A673 (cell line): ENCODE measurements at regions of chr9 and their contacts with region 1.

Region 1: DNA sequence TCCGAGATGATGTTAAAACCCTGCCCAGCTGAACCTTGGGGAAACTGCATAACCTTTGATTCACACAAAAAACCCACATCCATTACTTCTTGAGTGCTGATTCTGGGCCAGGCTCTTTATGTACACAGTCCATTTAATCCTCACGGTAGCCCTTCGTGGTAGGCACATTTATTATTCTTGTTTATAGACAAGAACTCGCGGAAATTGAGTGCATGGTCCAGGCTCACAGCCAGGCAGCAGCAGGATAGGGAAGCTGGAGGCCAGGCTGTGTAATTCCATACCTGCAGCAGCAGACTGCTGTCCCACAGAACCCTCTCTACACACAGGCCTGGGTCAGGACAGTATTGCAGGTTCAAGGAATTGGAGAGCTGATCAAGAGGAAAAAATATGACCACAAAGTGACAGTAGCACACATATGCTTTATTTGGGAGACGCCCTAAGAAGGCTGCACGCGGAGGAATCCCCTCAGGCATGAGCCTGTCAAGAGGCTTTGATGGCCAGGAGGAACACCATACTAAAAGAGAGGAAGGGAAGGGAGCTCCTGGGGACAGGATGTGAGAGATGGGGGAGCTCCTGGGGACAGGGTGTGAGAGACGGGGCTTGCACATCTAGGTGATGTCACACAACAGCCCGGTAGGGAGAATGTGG is 28.4 kb upstream of the FAM120A start:
- DNase-seq: no peak
- H3K4me3 ChIP-seq: no peak overlapping the region
- H3K27ac ChIP-seq: no peak overlapping the region
- H3K4me1 ChIP-seq: no peaks in the 10 kb centered on the region
- H3K27me3 ChIP-seq: no peaks in the 10 kb centered on the region
- CTCF ChIP-seq: no peak

Region 2: GRCh38 chr9:92942688-92943616 is 480.1 kb before region 1 on chr9:
- CTCF ChIA-PET with region 1: no interaction called
- POLR2A ChIA-PET with region 1: no interaction called
- intact Hi-C with region 1: no loop called
- DNase-seq: no peak
- H3K4me3 ChIP-seq: no peak overlapping the region
- H3K27ac ChIP-seq: no peak overlapping the region
- H3K4me1 ChIP-seq: no peaks in the 10 kb centered on the region
- H3K27me3 ChIP-seq: peaks cover 5% of the 10 kb centered on the region
- CTCF ChIP-seq: no peak

Region 3: GRCh38 chr9:93501406-93501805 is 78.3 kb after region 1 on chr9:
- CTCF ChIA-PET with region 1: no interaction called
- POLR2A ChIA-PET with region 1: interaction called, 15 read pairs
- intact Hi-C with region 1: no loop called
- DNase-seq: no peak
- H3K4me3 ChIP-seq: no peak overlapping the region
- H3K27ac ChIP-seq: no peak overlapping the region
- H3K4me1 ChIP-seq: no peaks in the 10 kb centered on the region
- H3K27me3 ChIP-seq: no peaks in the 10 kb centered on the region
- CTCF ChIP-seq: no peak